MCF 10A (cell line): ENCODE measurements at regions of chr5 and their contacts with region 1.

Region 1: GRCh38 chr5:23139338-23140171 is 286.4 kb upstream of the CDH12 start:
- DNase-seq: peak; percentile 59
- H3K4me3 Mint-ChIP-seq: no peak overlapping the region
- H3K27ac Mint-ChIP-seq: peak overlapping the region; percentile 71
- H3K4me1 Mint-ChIP-seq: peaks cover 9% of the 10 kb centered on the region
- H3K27me3 Mint-ChIP-seq: no peaks in the 10 kb centered on the region
- CTCF ChIP-seq: peak; percentile 54

Region 2: DNA sequence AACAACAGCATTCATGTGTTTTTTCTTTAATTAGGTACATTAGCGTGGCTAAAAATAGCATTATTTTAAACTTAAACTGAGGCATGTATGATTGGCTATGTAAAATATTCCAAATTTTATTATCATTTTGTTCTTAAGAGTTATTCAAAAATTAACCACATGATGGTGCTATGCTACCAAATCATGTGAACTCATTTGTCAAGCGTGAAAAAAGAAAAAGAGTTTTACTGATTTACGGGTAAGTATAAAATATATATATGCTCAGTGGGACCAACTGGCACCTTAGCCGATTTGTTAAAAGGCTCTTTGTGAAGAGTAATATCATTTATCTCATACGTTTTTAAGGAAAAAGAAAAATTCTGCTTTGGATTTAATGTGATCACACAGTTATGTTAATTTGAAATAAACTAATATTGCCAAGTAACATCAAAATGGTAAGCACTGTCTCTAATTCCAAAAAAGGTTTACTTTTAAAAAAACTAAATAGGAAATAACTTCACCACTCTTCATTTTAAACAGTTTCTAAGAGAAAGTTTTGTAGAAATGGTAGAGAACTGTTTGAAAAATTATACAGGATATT is 1328.7 kb before region 1 on chr5:
- CTCF ChIA-PET with region 1: no interaction called
- POLR2A ChIA-PET with region 1: no interaction called
- intact Hi-C with region 1: loop called (anchors 1 kb)
- DNase-seq: peak; percentile 40
- H3K4me3 Mint-ChIP-seq: no peak overlapping the region
- H3K27ac Mint-ChIP-seq: no peak overlapping the region
- H3K4me1 Mint-ChIP-seq: peaks cover 37% of the 10 kb centered on the region
- H3K27me3 Mint-ChIP-seq: no peaks in the 10 kb centered on the region
- CTCF ChIP-seq: peak; percentile 47

Region 3: GRCh38 chr5:21919410-21920022 is 1220.0 kb before region 1 on chr5:
- CTCF ChIA-PET with region 1: interaction called, 3 read pairs
- POLR2A ChIA-PET with region 1: no interaction called
- intact Hi-C with region 1: loop called (anchors 2 kb)
- DNase-seq: peak; percentile 59
- H3K4me3 Mint-ChIP-seq: no peak overlapping the region
- H3K27ac Mint-ChIP-seq: no peak overlapping the region
- H3K4me1 Mint-ChIP-seq: peaks cover 6% of the 10 kb centered on the region
- H3K27me3 Mint-ChIP-seq: no peaks in the 10 kb centered on the region
- CTCF ChIP-seq: peak; percentile 65

Region 4: GRCh38 chr5:23257656-23258055 is 118.1 kb after region 1 on chr5:
- CTCF ChIA-PET with region 1: no interaction called
- POLR2A ChIA-PET with region 1: no interaction called
- intact Hi-C with region 1: no loop called
- DNase-seq: peak; percentile 55
- H3K4me3 Mint-ChIP-seq: no peak overlapping the region
- H3K27ac Mint-ChIP-seq: peak overlapping the region; percentile 9
- H3K4me1 Mint-ChIP-seq: no peaks in the 10 kb centered on the region
- H3K27me3 Mint-ChIP-seq: no peaks in the 10 kb centered on the region
- CTCF ChIP-seq: no peak